ENCODE measurements at regions of chr2 and their contacts with region 1.

Region 1: DNA sequence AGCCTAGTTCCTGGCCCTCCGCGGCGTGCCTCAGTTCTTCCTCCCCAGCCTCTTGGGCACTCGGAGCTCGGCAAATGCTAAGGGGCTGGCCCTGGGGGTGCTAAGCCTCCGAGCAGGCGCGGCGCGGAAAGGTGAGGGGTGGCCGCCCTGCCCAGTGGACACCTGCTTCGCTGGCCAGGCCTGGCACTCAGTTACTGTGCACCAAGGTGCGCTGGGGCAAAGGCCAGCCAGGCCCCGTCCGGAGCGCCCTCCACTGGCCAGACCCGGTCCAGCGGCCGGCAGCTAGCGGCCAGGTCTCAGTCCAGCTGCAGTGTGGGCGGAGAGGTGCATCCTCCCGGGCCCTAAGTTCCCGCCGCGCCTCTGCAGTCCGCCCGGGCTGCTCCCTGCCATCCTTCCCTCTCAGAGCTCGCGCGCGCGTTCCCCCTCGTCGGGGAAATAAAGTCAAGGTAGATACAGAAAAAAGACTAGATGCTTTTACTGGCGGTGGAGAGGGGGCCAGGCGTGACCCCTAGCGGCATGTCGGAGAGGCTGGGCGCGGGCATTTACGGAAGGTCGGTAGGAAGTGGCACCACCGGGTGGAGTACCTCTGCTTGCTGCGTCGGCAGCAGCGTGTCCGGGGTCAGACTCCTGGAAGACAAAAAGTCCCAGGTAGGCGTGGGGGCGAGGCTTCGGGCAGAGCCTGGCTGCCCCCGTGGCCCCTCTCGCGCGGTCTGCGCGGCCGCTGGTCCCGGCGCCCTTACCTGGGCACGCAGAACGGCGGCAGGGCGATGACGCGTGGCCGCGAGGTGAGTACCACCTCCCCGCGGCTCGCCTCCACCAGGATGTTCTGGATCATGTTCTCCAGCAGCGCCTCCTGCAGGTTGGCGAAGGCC is 9.4 kb upstream of the CRYBA2 start:
- DNase-seq: peak in 1 of 2 experiments; percentile 96
- H3K4me3 ChIP-seq: peak overlapping the region; percentile 31 to 65 (median 41)
- H3K27ac ChIP-seq: no peak overlapping the region
- H3K4me1 ChIP-seq: peaks cover 0 to 32% (median 22%) of the 10 kb centered on the region in 4 experiments; a peak in 6 of 7 replicates
- H3K27me3 ChIP-seq: peaks cover 65 to 82% (median 79%) of the 10 kb centered on the region in 4 experiments
- CTCF ChIP-seq: peak in 2 of 3 experiments; percentile 87 to 91; a peak in 3 of 4 replicates
- EP300 ChIP-seq: no peak
- POLR2A ChIP-seq: peak in 1 of 2 experiments; percentile 38; a peak in 1 of 3 replicates
- RAD21 ChIP-seq: peak; percentile 40 to 54; a peak in 3 of 4 replicates

Region 2: DNA sequence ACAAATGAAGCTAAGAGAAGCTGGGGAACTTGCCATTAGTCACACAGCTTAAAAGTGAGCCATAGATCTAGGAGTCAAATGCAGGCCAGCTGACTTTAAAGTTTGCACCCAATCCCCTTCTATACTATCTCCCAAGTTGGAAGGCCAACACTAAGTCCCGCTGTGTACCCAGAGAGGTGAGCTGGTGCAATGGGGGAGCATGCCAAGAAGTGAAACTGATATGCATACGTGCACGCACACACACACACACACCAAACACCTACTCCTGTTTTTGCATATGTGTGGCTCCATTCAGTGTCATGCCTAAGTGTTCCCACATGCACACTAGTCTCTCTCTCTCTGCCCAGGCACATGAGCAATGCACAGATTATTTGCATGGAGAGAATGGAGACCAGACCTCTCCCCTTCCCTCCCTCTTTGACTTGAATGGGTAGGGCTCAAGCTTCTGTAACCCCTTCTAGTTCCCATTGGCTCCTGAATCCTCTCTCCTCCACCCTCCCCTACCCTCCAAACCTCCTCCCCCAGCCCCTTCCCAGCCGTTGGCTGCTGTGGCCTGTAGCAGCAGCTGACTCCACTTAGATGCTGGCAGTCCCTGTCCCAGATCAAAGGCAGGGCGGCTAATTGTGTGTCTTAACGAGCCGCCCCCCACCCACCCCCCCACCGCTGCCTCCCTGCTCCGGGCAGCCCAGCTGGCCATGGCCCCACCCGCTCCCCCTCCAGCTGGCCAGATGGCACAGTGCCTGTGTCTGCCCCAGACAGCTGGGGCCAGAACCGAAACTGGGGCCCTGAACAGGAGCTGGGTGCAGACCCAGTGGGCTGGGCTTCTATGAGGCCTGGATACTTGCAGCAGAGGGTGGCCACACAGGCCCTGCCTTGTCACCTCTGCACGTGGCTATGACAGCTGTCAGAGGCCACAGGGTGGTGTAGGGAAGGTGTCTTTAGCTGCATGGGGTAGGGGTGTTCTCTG is 116.4 kb before region 1 on chr2:
- CTCF ChIA-PET with region 1: interaction called, 16 read pairs
- POLR2A ChIA-PET with region 1: interaction called, 3 read pairs
- DNase-seq: no peak
- H3K4me3 ChIP-seq: no peak overlapping the region
- H3K27ac ChIP-seq: no peak overlapping the region
- H3K4me1 ChIP-seq: peaks cover 0 to 4% (median 2%) of the 10 kb centered on the region in 4 experiments; a peak in 4 of 7 replicates
- H3K27me3 ChIP-seq: peaks cover 76 to 93% (median 90%) of the 10 kb centered on the region in 4 experiments
- CTCF ChIP-seq: no peak
- EP300 ChIP-seq: no peak
- POLR2A ChIP-seq: no peak
- RAD21 ChIP-seq: no peak

Region 3: GRCh38 chr2:219041252-219041651 is 38.6 kb after region 1 on chr2 and contains the start of gene CFAP65:
- CTCF ChIA-PET with region 1: interaction called, 33 read pairs
- POLR2A ChIA-PET with region 1: no interaction called
- DNase-seq: peak in 1 of 2 experiments; percentile 86
- H3K4me3 ChIP-seq: peak within 1 kb of the TSS; percentile 52 to 65 (median 60)
- H3K27ac ChIP-seq: no peak within 1 kb of the TSS
- H3K4me1 ChIP-seq: peaks cover 0 to 3% (median 0%) of the 10 kb centered on the region in 4 experiments; a peak in 1 of 7 replicates
- H3K27me3 ChIP-seq: peaks cover 0 to 5% (median 0%) of the 10 kb centered on the region in 4 experiments; a peak in 1 of 7 replicates
- CTCF ChIP-seq: no peak
- EP300 ChIP-seq: no peak
- POLR2A ChIP-seq: no peak
- RAD21 ChIP-seq: no peak
- total RNA-seq, gene CFAP65: 0.13 and 0.19 TPM in 2 replicates

Region 4: DNA sequence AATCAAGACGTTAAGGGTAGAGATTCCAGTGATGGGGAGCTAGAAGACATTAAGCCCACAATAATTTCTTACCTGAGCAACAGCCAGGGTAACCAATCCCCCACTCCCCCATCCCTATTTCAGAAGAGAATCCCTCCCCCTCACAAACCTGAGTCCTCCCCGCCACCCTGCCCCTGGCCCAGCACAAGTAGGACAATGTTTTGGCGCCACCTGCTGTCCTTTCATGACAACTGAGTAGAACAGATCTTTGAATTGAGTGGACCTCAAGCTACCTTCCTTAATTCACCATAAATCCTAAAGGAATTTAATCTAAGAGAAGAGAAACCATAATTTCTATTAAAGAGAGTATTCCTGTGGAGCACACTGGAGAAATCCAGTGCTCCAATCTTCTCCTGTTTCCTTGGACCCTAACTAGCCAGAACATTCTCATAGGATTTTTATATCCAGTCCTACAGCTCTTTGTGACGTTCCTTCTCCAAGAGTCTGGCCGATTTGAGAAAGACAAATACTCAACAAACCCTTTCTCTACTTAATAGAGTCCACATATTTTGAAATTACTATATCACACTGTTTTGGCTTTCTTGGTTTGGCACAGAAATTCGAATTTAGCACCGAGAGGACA is 116.9 kb after region 1 on chr2:
- CTCF ChIA-PET with region 1: interaction called, 68 read pairs
- POLR2A ChIA-PET with region 1: no interaction called
- DNase-seq: peak in 1 of 2 experiments; percentile 79
- H3K4me3 ChIP-seq: no peak overlapping the region
- H3K27ac ChIP-seq: no peak overlapping the region
- H3K4me1 ChIP-seq: no peaks in the 10 kb centered on the region; a peak in 2 of 7 replicates
- H3K27me3 ChIP-seq: no peaks in the 10 kb centered on the region
- CTCF ChIP-seq: peak; percentile 64 to 82 (median 67)
- EP300 ChIP-seq: no peak
- POLR2A ChIP-seq: no peak
- RAD21 ChIP-seq: peak; percentile 90 to 92

Region 5: DNA sequence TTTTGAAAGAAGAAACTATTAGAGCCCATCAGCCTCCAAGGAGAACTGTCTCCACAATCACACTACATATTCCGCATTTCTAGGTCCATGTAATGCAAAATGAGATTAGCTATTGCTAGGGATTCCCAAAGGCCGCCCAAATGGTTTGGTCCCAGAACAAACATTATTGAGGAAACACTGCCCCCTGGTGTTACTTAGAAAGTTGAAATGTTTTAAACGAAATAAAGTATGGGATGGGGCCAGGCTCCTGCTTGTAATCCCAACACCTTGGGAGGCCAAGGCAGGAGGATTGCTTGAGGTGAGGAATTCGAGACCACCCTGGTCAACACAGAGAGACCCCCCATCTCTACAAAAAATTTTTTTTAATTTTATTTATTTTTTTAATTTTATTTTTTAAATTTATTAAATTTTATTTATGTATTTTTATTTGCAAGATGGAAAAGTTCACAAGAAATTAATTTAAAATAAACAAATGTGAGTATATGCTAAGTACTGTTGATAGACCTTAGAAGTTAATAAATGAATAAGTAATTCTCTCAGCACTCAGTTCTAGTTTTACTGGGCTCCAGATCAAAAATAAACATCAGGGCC is 152.5 kb after region 1 on chr2:
- CTCF ChIA-PET with region 1: interaction called, 33 read pairs
- POLR2A ChIA-PET with region 1: no interaction called
- DNase-seq: no peak
- H3K4me3 ChIP-seq: no peak overlapping the region
- H3K27ac ChIP-seq: no peak overlapping the region
- H3K4me1 ChIP-seq: peaks cover 0 to 5% (median 2%) of the 10 kb centered on the region in 4 experiments; a peak in 2 of 7 replicates
- H3K27me3 ChIP-seq: no peaks in the 10 kb centered on the region
- CTCF ChIP-seq: peak in 2 of 3 experiments; percentile 45 to 70; a peak in 3 of 4 replicates
- EP300 ChIP-seq: no peak
- POLR2A ChIP-seq: no peak
- RAD21 ChIP-seq: peak; percentile 79 to 87

Region 6: DNA sequence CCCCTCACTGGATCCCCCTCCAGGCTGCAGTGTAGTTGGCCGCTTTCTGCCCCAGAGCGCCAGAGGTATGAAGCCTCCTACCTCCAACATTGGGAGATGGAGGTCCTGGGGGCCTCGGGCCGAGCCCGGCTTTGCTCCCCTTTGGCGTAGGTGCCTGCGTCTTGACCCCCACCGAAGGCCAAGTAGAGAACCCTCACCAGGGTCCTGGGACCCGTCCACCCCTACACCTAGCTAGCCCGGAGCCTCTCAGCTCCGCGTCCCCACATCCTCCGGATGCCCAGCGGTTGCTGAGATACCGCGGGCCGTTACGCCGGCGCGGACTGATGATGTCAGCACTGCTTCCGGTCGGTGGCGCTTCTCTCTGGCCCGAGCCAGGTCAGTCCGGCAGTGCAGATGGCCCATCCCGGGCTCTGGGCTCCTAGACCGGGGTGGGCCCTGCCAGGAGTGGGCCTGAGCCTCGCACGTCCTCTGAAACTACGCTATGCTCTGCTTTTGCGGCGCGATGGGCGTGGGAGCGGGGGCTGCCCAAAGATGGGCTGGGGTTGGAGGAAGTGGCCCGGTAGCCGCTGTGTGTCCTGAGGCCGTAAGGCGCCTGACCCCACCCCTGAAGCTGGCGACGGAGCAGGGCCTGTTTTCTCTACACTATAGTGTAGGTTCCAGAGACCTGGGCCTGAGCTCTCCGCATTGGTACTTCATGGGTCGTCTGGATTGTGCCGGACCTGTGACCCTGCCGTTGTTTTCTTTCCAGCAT is 242.7 kb after region 1 on chr2 and contains the starts of genes GLB1L and STK16:
- CTCF ChIA-PET with region 1: no interaction called
- POLR2A ChIA-PET with region 1: no interaction called
- DNase-seq: peak in 1 of 2 experiments; percentile 98
- H3K4me3 ChIP-seq: peak within 1 kb of the TSS; percentile 74 to 81 (median 80)
- H3K27ac ChIP-seq: peak within 1 kb of the TSS; percentile 91
- H3K4me1 ChIP-seq: peaks cover 0 to 5% (median 3%) of the 10 kb centered on the region in 4 experiments; a peak in 3 of 7 replicates
- H3K27me3 ChIP-seq: no peaks in the 10 kb centered on the region
- CTCF ChIP-seq: no peak
- EP300 ChIP-seq: no peak
- POLR2A ChIP-seq: peak in 1 of 2 experiments; percentile 91; a peak in 2 of 3 replicates
- RAD21 ChIP-seq: no peak
- total RNA-seq, gene GLB1L: 3.2 and 3.7 TPM in 2 replicates
- total RNA-seq, gene STK16: 17.0 and 21.3 TPM in 2 replicates